ENCODE measurements at regions of chr16 and their contacts with region 1.

Region 1: DNA sequence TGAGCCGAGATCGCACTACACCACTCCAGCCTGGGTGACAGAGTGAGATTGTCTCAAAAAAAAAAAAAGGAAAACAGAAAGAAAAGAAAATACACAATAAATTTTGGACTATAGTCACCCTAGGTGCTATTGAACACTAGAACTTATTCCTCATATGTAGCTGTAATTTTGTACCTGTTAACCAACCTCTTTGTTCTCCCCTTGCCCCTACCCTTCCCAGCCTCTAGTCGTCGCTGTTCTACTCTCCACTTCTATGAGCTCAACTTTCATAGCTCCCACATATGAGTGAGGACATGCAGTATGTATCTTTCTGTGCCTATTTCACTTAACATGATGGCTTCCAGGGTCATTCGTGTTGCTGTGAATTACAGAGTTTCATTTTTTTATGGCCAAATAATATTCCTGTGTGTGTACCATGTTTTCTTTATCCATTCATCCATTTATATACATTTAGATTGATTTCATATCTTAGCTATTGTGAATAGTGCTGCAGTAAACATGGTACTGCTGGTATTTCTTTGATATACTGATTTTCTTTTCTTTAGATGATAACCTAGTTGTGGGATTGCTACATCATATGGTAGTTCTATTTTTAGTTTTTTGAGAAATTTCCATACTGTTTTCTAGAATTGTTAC is 28.3 kb downstream of the VPS35L start:
- DNase-seq: peak in 1 of 10 donors; percentile 31
- H3K4me3 ChIP-seq: no peak overlapping the region
- H3K27ac ChIP-seq: peak overlapping the region in 56 of 59 donors; percentile 1 to 100 (median 96)
- H3K27me3 ChIP-seq: no peaks in the 10 kb centered on the region
- CTCF ChIP-seq: peak; percentile 20 to 79 (median 66)

Region 2: DNA sequence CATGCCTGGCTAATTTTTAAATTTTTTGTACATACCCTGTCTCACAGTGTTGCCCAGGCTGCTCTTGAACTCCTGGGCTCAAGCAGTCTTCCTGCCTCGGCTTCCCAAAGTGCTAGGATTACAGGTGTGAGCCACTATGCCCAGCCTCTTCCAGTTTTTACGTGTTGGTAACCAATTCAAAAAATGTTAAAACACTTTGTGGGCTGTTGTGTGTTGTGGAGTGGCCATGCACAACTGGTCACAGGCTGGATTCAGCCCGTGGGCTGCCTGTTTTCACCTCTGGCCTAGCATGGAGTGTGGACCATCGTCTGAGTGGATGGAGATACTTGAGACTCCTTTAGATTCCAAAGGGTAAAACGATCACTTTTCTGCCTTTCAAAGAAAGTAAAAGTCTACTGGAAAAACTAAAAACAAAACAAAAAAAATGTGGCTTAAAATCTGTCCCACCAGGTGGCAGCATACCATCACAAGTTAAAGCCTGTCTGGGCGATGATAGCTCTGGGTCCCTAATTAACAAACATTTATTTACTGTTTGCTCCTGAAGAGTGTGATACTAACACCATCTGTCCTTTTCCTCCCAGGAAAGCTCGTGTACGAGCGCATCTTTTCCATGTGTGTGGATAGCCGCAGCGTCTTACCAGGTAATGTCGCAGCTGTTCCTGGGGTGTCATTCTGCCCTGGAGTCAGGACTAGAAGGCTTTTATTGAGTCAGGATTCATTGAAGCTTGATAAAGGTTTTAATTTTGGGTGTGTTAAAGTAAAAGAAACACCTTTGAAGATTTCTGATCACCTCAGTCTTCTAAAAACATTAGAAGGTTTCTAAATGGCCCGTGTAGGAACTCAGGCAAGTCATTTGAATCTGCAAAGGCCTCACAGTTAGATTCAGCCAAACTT is 17.5 kb after region 1 on chr16:
- intact Hi-C with region 1: loop called in 1 of 2 experiments (anchors 2 kb)
- DNase-seq: peak in 3 of 10 donors; percentile 15 to 47 (median 41)
- H3K4me3 ChIP-seq: peak overlapping the region in 26 of 59 donors; percentile 0 to 42 (median 21)
- H3K27ac ChIP-seq: peak overlapping the region; percentile 7 to 97 (median 89)
- H3K27me3 ChIP-seq: no peaks in the 10 kb centered on the region
- CTCF ChIP-seq: peak; percentile 70 to 95 (median 87)

Measured in dorsolateral prefrontal cortex (tissue), 120 donors.